Right ventricle myocardium inferior (tissue), 1 donor: ENCODE measurements at regions of chr6 and their contacts with region 1.

Region 1: GRCh38 chr6:56708810-56709597 is 66.3 kb upstream of the DST start:
- DNase-seq: no peak
- ATAC-seq: peak; percentile 38

Region 2: DNA sequence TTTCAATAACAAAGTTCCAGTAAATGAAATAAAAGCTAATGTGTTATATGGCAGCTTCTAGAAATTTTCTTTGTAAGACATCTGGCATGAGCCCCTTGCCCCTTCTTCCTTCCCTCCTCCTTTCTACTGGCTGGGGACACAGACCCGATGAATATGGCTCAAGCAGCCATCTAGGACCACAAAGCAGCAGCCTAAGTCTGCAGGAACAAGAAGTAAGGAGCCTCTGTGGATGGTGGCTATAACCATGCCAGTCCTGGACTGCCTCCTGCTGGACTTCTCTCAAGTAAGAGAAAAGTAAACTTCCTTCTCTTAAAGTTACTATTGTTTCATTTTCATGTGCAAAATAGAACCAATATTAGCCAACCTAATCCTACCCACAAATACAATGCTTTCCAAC is 48.6 kb after region 1 on chr6:
- intact Hi-C with region 1: loop called (anchors 2 kb)
- DNase-seq: no peak
- ATAC-seq: peak; percentile 41

Region 3: GRCh38 chr6:56827908-56828649 is 119.1 kb after region 1 on chr6:
- intact Hi-C with region 1: no loop called
- DNase-seq: no peak
- ATAC-seq: no peak

Region 4: GRCh38 chr6:56851541-56852259 is 142.7 kb after region 1 on chr6:
- intact Hi-C with region 1: loop called (anchors 2 kb)
- DNase-seq: no peak
- ATAC-seq: peak; percentile 85